ENCODE measurements at regions of chr7 and their contacts with region 1.

Region 1: GRCh38 chr7:30284298-30285066 is at the start of gene ZNRF2:
- DNase-seq: peak; percentile 99
- ATAC-seq: peak; percentile 97
- H3K4me3 ChIP-seq: peak within 1 kb of the TSS; percentile 66 to 86
- H3K27ac ChIP-seq: peak within 1 kb of the TSS; percentile 72 to 86
- H3K4me1 ChIP-seq: no peaks in the 10 kb centered on the region
- H3K27me3 ChIP-seq: no peaks in the 10 kb centered on the region
- total RNA-seq, gene ZNRF2: 15.3 to 21.1 TPM

Region 2: DNA sequence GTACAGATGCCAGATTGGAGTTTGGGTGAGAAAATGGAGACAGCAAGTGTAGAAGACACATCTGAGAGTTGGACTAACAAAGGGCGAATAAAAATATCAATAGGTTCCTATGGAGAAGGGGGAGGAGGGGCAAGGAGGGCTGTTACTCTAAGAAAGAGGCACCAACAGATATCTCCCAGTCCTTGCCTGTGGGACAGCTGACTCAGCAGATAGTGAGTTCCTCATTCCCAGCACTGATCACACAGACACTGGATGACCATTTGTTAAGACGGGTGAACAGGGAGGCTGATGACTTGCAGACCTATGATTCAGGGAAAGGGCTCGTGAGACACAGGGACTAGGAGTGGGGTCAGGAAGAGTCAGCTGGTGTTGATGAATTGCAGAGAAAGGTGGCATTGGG is 726.5 kb before region 1 on chr7:
- intact Hi-C with region 1: no loop called
- DNase-seq: peak in 1 of 2 donors; percentile 55
- ATAC-seq: no peak
- H3K4me3 ChIP-seq: no peak overlapping the region
- H3K27ac ChIP-seq: no peak overlapping the region
- H3K4me1 ChIP-seq: no peaks in the 10 kb centered on the region
- H3K27me3 ChIP-seq: no peaks in the 10 kb centered on the region

Region 3: GRCh38 chr7:30173058-30173897 is 111.2 kb before region 1 on chr7:
- intact Hi-C with region 1: loop called in 1 of 2 experiments (anchors 5 kb)
- DNase-seq: peak; percentile 87 to 90
- ATAC-seq: peak; percentile 85
- H3K4me3 ChIP-seq: no peak overlapping the region
- H3K27ac ChIP-seq: peak overlapping the region; percentile 89 to 98
- H3K4me1 ChIP-seq: peaks cover 3 to 12% of the 10 kb centered on the region in 2 donors
- H3K27me3 ChIP-seq: no peaks in the 10 kb centered on the region

Region 4: DNA sequence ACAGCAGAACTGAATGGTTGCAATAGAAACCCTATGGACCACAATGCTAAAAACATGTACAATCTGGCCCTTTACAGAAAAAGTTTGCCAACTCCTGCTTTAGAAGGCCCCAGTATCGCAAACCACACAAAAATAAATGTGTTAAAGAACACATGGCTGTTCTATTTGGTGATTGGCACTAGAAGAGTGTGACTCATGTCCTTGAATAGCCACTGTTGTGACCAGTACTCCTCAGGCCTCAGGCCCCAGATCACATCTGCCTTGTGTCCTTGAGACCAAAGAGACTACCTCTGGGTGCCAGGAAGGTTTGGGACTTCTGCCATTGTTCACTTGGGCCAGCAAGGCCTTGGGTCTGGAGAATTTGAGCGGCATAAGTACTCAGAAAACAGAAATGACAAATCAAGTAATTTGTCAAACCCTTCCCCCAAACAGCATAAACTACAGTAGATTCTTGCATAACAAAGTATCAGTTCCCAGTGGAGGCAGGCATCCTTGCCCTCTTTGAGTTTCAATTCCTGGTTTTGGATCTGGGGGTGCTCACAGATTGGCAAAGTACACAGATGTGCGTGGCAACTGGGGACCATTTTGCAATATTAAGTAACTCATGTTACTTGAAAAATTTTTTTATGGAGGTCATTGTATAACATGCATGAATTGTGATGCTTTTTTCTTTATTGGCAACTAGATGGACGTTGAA is 99.5 kb before region 1 on chr7:
- intact Hi-C with region 1: loop called in 1 of 2 experiments (anchors 5 kb)
- DNase-seq: peak in 1 of 2 donors; percentile 73
- ATAC-seq: peak; percentile 82
- H3K4me3 ChIP-seq: no peak overlapping the region
- H3K27ac ChIP-seq: peak overlapping the region; percentile 7 to 58
- H3K4me1 ChIP-seq: peaks cover 7 to 14% of the 10 kb centered on the region in 2 donors
- H3K27me3 ChIP-seq: no peaks in the 10 kb centered on the region

Region 5: GRCh38 chr7:30348083-30348560 is 63.6 kb after region 1 on chr7:
- intact Hi-C with region 1: loop called in 1 of 2 experiments (anchors 5 kb)
- DNase-seq: no peak
- ATAC-seq: no peak
- H3K4me3 ChIP-seq: no peak overlapping the region
- H3K27ac ChIP-seq: no peak overlapping the region
- H3K4me1 ChIP-seq: peaks cover 0 to 2% of the 10 kb centered on the region in 2 donors
- H3K27me3 ChIP-seq: no peaks in the 10 kb centered on the region